ENCODE measurements at regions of chr20 and their contacts with region 1.

Region 1: GRCh38 chr20:34312544-34313217 is 9.5 kb upstream of the AHCY start:
- DNase-seq: peak; percentile 94
- ATAC-seq: peak; percentile 99
- H3K4me3 Mint-ChIP-seq: no peak overlapping the region
- H3K27ac Mint-ChIP-seq: no peak overlapping the region
- H3K4me1 Mint-ChIP-seq: peaks cover 7% of the 10 kb centered on the region
- H3K27me3 Mint-ChIP-seq: peaks cover 18% of the 10 kb centered on the region

Region 2: DNA sequence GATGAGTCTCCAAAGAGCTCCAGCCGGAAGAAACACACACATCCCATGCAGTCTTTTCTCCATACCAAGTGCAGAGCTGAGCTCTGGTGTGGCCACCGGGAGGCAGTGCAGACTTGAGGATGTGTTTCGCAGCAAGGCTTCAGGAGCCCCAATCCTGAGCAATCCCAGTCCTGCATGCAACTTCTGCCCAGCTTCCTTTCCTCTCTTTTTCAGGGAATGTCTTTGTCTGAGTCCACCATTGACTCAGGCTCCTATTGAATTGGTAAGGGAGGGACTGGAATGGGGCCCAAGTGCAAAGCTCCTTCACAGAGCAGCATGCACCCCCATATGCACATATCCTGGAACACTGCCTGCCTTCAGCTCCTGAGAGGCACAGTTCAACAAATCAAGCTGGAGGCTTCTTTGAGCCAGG is 122.0 kb before region 1 on chr20:
- CTCF ChIA-PET with region 1: interaction called, 11 read pairs
- POLR2A ChIA-PET with region 1: no interaction called
- intact Hi-C with region 1: no loop called
- DNase-seq: peak; percentile 73
- ATAC-seq: peak; percentile 74
- H3K4me3 Mint-ChIP-seq: no peak overlapping the region
- H3K27ac Mint-ChIP-seq: no peak overlapping the region
- H3K4me1 Mint-ChIP-seq: no peaks in the 10 kb centered on the region
- H3K27me3 Mint-ChIP-seq: peaks cover 9% of the 10 kb centered on the region

Region 3: GRCh38 chr20:34403908-34404307 is 91.2 kb after region 1 on chr20:
- CTCF ChIA-PET with region 1: interaction called, 12 read pairs
- POLR2A ChIA-PET with region 1: no interaction called
- intact Hi-C with region 1: no loop called
- DNase-seq: no peak
- ATAC-seq: no peak
- H3K4me3 Mint-ChIP-seq: no peak overlapping the region
- H3K27ac Mint-ChIP-seq: peak overlapping the region; percentile 28
- H3K4me1 Mint-ChIP-seq: peaks cover 49% of the 10 kb centered on the region
- H3K27me3 Mint-ChIP-seq: no peaks in the 10 kb centered on the region

Region 4: DNA sequence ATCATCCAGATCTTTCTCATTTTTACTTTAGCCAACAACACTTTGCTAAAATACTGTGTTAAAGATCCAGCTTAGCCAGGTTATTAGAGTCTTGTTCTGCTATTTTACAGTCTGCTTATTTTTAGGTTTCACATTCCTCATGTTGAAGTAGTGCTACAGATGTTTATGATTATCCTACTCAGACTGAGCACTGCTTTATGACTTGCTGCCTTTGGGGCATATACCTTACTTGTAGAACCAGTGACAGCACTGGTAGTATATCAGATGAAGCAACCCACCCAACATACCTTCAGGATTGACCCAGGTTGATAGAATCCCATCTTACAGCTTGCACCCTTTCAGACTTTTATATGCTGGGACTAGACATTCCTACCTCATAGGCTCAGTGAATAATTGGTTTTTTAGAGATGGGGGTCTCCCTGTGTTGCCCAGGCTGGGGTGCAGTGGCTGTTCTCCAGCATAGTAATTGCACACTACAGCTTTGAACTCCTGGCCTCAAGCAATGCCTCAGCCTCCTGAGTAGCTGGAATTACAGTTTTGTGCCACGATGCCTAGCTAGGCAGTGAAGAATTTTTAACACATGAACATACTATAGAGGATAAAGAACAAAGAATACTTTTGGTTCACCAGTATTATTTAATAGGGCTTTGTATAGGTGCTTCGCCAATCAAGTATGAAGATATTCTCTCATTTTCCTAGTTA is 139.8 kb after region 1 on chr20:
- CTCF ChIA-PET with region 1: interaction called, 14 read pairs
- POLR2A ChIA-PET with region 1: no interaction called
- intact Hi-C with region 1: no loop called
- DNase-seq: no peak
- ATAC-seq: no peak
- H3K4me3 Mint-ChIP-seq: no peak overlapping the region
- H3K27ac Mint-ChIP-seq: no peak overlapping the region
- H3K4me1 Mint-ChIP-seq: peaks cover 3% of the 10 kb centered on the region
- H3K27me3 Mint-ChIP-seq: no peaks in the 10 kb centered on the region

Region 5: DNA sequence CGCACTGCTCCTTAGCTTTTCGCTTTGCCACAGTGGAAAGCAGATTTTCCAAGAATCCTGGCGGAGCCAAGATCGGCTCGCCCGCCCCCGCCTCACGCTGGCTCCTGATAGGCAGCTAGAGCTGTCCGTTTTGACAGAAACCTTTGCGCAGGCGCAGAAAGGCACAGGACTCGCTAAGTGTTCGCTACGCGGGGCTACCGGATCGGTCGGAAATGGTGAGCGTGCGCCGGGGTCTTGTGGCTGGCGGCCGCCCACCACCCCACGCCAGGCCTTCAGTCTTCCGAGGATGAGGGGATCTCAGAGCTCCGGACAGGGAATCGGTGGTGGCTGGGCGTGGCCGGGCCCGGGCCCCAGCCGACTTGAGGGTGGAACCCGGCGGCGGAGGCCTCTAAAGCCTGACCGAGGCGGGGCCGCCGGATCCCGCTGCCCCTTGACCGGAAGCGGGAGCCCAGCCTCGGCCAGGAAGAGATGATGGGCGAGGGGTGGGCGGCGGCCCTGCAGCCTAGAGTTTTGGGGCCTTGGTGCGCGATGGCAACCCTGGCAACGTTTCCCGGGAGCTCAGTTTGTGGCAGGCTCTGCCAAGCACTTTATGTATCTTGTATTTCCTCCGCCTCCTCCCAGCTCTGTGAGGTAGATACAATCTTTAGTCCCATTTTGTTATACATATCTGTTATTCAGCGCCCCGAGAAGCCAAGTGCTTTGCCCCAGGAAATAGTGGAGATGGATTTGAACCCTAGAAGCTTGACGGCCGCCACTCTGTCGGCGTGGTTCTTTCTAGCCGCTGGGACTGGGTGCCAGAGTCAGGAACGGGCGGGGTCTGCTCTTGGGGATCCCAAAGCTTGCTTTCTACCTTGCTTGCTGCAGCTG is 203.8 kb after region 1 on chr20 and contains the start of gene DYNLRB1:
- CTCF ChIA-PET with region 1: interaction called, 82 read pairs
- POLR2A ChIA-PET with region 1: interaction called, 9 read pairs
- intact Hi-C with region 1: loop called in 1 of 2 experiments (anchors 1 kb)
- DNase-seq: peak; percentile 98
- ATAC-seq: peak; percentile 81
- H3K4me3 Mint-ChIP-seq: peak within 1 kb of the TSS; percentile 97
- H3K27ac Mint-ChIP-seq: peak within 1 kb of the TSS; percentile 98
- H3K4me1 Mint-ChIP-seq: peaks cover 35% of the 10 kb centered on the region
- H3K27me3 Mint-ChIP-seq: no peaks in the 10 kb centered on the region
- total RNA-seq, gene DYNLRB1: 83.5 to 122 TPM

Region 6: GRCh38 chr20:34538671-34539123 is 226.0 kb after region 1 on chr20:
- CTCF ChIA-PET with region 1: interaction called, 23 read pairs
- POLR2A ChIA-PET with region 1: no interaction called
- intact Hi-C with region 1: loop called in 1 of 2 experiments (anchors 5 kb)
- DNase-seq: peak; percentile 78
- ATAC-seq: peak; percentile 61
- H3K4me3 Mint-ChIP-seq: no peak overlapping the region
- H3K27ac Mint-ChIP-seq: no peak overlapping the region
- H3K4me1 Mint-ChIP-seq: peaks cover 7% of the 10 kb centered on the region
- H3K27me3 Mint-ChIP-seq: no peaks in the 10 kb centered on the region

Region 7: DNA sequence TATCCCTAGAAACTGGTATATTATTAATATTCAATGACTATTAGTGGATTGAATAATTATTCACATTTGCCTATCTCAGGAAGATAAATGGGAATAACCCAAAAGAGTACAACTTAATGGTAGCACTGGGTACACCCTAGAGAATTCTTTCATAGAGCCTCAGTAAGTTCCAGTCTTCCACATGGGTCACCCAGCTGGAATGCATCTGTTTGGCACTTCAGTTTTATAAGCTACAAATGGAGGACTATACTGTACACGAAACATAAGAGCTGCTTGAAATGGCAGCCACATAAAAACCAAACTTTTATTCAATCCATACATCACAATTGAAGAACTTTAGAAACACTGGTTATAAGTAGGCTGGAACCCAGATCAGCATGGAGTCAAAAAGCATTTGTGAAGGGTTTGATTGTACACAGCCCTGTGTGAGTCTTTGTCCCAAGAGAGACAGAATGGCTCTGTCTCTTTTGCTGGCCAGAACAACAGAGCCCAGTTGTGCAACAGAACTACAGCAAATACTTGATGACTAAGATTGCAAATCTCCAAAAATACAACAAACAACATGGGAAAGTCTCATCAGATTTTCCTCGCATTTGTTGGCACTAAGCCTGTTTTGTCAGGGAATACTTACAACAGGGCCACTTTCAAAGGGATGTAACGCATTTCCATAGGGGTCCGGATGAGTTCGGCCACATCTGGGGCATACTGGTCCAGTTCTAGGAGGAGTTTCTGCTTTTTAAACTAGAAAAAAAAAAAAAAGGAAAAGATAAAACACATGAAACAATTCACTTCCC is 324.8 kb after region 1 on chr20:
- CTCF ChIA-PET with region 1: no interaction called
- POLR2A ChIA-PET with region 1: no interaction called
- intact Hi-C with region 1: no loop called
- DNase-seq: no peak
- ATAC-seq: no peak
- H3K4me3 Mint-ChIP-seq: no peak overlapping the region
- H3K27ac Mint-ChIP-seq: no peak overlapping the region
- H3K4me1 Mint-ChIP-seq: no peaks in the 10 kb centered on the region
- H3K27me3 Mint-ChIP-seq: no peaks in the 10 kb centered on the region

Region 8: GRCh38 chr20:34704177-34705007 is 391.7 kb after region 1 on chr20 and contains the start of gene TP53INP2:
- CTCF ChIA-PET with region 1: interaction called, 8 read pairs
- POLR2A ChIA-PET with region 1: no interaction called
- intact Hi-C with region 1: loop called (anchors 1 to 2 kb)
- DNase-seq: peak; percentile 89
- ATAC-seq: peak; percentile 33
- H3K4me3 Mint-ChIP-seq: peak within 1 kb of the TSS; percentile 82
- H3K27ac Mint-ChIP-seq: peak within 1 kb of the TSS; percentile 63
- H3K4me1 Mint-ChIP-seq: peaks cover 22% of the 10 kb centered on the region
- H3K27me3 Mint-ChIP-seq: peaks cover 10% of the 10 kb centered on the region
- total RNA-seq, gene TP53INP2: 2.2 to 2.3 TPM